ENCODE measurements at regions of chr6 and their contacts with region 1.

Region 1: DNA sequence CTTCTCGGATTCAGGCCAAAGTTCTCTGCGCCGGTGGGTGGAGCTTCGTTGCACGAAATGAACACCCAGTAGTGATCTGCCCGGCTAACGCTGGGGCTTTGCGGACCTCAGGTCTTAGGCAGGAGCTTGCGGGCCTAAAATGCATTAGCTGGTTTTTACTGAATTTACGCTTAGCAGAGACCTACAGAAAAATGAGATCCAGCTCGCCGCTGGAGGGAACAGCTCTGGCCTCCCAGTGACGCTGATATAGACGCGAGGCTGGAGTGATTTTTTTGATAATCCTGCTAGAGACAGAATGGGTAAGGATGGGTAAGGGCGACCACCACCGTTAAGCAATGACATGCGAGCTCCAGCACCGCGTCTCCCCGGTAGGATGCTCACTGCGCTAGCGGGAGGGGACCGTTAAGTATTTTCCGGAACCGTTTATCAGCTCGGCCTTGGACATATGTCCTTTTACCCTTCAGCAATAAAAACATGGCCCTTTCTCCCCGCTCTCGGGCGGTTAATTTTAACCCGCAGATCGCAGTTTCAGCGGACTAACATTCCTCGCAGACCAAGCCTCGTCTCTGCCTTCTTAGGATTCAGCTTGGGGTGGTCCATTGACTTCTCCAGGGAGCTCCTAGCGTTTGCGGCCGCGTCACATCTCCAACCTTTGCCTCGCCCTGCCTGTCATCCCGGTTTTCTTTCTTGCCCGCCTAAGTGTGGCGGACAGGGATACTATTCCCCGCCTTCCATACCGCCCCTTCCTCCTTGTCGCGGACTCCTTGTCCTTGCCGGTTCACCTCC is 109.3 kb downstream of the GPX5 start:
- DNase-seq: no peak
- ATAC-seq: no peak
- H3K4me3 ChIP-seq: no peak overlapping the region
- H3K4me3 Mint-ChIP-seq: peak overlapping the region; percentile 4 to 78 (median 42)
- H3K27ac ChIP-seq: no peak overlapping the region
- H3K27ac Mint-ChIP-seq: peak overlapping the region in 2 of 9 donors; percentile 35 to 78
- H3K4me1 ChIP-seq: peaks cover 0 to 3% of the 10 kb centered on the region in 2 donors
- H3K4me1 Mint-ChIP-seq: peaks cover 5 to 27% (median 15%) of the 10 kb centered on the region in 7 donors
- H3K27me3 ChIP-seq: peaks cover 7 to 20% of the 10 kb centered on the region in 2 donors
- H3K27me3 Mint-ChIP-seq: peaks cover 69 to 92% (median 88%) of the 10 kb centered on the region in 5 donors

Region 2: GRCh38 chr6:28648035-28648877 is 13.3 kb after region 1 on chr6:
- CTCF ChIA-PET with region 1: no interaction called
- POLR2A ChIA-PET with region 1: no interaction called
- intact Hi-C with region 1: no loop called
- DNase-seq: peak in 7 of 9 donors; percentile 16 to 63 (median 36)
- ATAC-seq: no peak
- H3K4me3 ChIP-seq: peak overlapping the region; percentile 14
- H3K4me3 Mint-ChIP-seq: peak overlapping the region; percentile 54 to 95 (median 86)
- H3K27ac ChIP-seq: no peak overlapping the region
- H3K27ac Mint-ChIP-seq: peak overlapping the region in 5 of 9 donors; percentile 0 to 83 (median 10)
- H3K4me1 ChIP-seq: peaks cover 0 to 7% of the 10 kb centered on the region in 2 donors
- H3K4me1 Mint-ChIP-seq: peaks cover 3 to 15% (median 13%) of the 10 kb centered on the region in 7 donors
- H3K27me3 ChIP-seq: peaks cover 0 to 15% of the 10 kb centered on the region in 2 donors
- H3K27me3 Mint-ChIP-seq: peaks cover 51 to 83% (median 56%) of the 10 kb centered on the region in 5 donors

Region 3: DNA sequence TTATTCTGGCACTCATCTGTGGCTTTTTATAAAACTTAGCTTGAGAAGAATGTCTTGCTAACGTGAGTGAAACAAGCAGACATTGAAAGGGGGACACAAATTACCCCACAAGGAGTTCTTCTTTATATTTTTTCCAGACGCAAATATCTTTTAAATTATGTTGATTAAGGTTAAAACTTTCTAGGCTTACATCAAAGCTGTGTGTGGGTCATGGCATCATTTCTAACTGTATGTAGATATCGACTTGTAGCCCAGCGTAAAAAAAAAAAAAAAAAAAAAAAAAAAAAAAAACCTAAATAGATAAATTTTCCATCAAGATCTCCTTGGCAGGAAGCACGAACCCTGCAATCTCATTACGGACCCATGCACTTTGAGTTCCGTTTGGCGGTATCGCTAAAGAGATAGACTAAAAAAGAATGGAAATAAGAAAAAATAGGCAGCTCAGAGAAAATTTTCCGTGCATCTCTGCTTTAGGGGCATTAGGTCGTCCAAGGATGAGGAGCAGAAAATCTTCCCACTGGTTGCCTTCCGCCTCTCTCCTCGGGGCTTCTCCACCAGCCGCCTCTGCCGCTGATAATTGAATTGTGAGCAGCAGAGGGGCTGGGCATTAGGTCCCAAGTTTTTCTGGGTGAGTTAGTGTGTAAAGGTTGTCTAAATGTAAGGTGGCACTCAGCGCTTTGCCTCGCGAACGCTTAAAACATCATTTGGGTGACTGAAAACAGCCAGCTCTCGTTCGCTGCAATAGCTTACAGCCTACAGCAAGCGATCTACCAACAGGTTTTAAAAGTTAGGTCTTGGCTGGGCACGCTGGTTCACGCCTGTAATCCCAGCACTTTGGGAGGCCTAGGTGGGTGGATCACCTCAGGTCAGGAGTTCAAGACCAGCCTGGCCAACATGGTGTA is 94.8 kb after region 1 on chr6:
- CTCF ChIA-PET with region 1: no interaction called
- POLR2A ChIA-PET with region 1: no interaction called
- intact Hi-C with region 1: loop called in 1 of 2 experiments (anchors 10 kb)
- DNase-seq: no peak
- ATAC-seq: no peak
- H3K4me3 ChIP-seq: peak overlapping the region; percentile 49
- H3K4me3 Mint-ChIP-seq: peak overlapping the region; percentile 55 to 88 (median 84)
- H3K27ac ChIP-seq: no peak overlapping the region
- H3K27ac Mint-ChIP-seq: peak overlapping the region in 8 of 9 donors; percentile 8 to 93 (median 74)
- H3K4me1 ChIP-seq: peaks cover 3 to 5% of the 10 kb centered on the region in 2 donors
- H3K4me1 Mint-ChIP-seq: peaks cover 10 to 30% (median 22%) of the 10 kb centered on the region in 7 donors
- H3K27me3 ChIP-seq: peaks cover 11 to 42% of the 10 kb centered on the region in 2 donors
- H3K27me3 Mint-ChIP-seq: peaks cover 87 to 96% (median 92%) of the 10 kb centered on the region in 5 donors

Region 4: DNA sequence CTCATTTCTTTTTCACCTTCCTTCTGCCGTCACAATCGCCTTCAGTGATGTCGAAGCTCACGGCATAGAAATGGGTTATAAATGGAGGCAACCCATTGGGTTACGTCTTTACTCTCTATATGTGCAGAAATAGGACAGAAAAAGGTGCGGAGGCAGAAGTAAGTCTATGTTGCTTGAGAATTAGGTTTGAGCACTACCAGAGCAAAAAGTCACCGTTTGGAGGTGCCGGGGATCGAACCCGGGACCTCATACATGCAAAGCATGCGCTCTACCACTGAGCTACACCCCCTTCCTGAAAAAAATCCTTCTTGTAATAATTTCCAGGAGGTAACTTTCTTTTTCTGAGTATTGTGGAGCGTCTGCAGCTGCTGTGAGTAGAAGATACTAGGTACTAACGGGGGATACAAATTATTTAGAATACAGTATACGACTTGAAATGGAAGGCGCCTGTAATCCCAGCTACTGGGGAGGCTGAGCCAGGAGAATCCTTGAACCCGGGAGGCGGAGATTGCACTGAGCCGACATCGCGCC is 154.7 kb after region 1 on chr6:
- CTCF ChIA-PET with region 1: no interaction called
- POLR2A ChIA-PET with region 1: no interaction called
- intact Hi-C with region 1: loop called in 1 of 2 experiments (anchors 10 kb)
- DNase-seq: no peak
- ATAC-seq: no peak
- H3K4me3 ChIP-seq: no peak overlapping the region
- H3K4me3 Mint-ChIP-seq: peak overlapping the region in 8 of 10 donors; percentile 25 to 60 (median 48)
- H3K27ac ChIP-seq: no peak overlapping the region
- H3K27ac Mint-ChIP-seq: peak overlapping the region in 6 of 9 donors; percentile 37 to 73 (median 50)
- H3K4me1 ChIP-seq: no peaks in the 10 kb centered on the region
- H3K4me1 Mint-ChIP-seq: peaks cover 4 to 21% (median 12%) of the 10 kb centered on the region in 7 donors
- H3K27me3 ChIP-seq: peaks cover 11 to 46% of the 10 kb centered on the region in 2 donors
- H3K27me3 Mint-ChIP-seq: peaks cover 89 to 97% (median 93%) of the 10 kb centered on the region in 5 donors